ENCODE measurements at regions of chr11 and their contacts with region 1.

Region 1: DNA sequence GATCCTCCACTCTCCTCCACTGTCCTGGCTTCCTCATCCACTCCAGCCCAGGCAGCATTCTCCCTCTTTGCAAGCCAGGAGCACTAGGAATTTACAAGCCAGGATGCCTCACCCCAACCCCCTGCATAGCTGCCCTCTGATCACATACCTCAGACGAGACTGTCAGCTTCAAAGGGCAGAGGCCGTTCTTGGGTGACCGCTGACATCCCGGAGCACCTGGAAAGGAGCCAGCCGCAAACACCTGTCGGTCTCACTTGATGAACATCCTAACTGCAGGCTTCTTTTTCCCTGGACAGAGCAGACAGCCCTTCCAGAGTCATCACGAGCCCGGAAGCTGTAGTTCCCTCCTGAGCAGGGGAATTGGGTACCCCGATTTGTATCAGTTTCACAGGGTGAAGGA is 451.3 kb upstream of the B3GAT1 start:
- DNase-seq: no peak
- H3K4me3 ChIP-seq: no peak overlapping the region
- H3K27ac ChIP-seq: no peak overlapping the region
- H3K4me1 ChIP-seq: peaks cover 0 to 12% of the 10 kb centered on the region in 2 experiments; a peak in 2 of 4 replicates
- H3K27me3 ChIP-seq: no peaks in the 10 kb centered on the region
- CTCF ChIP-seq: no peak
- EP300 ChIP-seq: no peak
- RAD21 ChIP-seq: no peak

Region 2: DNA sequence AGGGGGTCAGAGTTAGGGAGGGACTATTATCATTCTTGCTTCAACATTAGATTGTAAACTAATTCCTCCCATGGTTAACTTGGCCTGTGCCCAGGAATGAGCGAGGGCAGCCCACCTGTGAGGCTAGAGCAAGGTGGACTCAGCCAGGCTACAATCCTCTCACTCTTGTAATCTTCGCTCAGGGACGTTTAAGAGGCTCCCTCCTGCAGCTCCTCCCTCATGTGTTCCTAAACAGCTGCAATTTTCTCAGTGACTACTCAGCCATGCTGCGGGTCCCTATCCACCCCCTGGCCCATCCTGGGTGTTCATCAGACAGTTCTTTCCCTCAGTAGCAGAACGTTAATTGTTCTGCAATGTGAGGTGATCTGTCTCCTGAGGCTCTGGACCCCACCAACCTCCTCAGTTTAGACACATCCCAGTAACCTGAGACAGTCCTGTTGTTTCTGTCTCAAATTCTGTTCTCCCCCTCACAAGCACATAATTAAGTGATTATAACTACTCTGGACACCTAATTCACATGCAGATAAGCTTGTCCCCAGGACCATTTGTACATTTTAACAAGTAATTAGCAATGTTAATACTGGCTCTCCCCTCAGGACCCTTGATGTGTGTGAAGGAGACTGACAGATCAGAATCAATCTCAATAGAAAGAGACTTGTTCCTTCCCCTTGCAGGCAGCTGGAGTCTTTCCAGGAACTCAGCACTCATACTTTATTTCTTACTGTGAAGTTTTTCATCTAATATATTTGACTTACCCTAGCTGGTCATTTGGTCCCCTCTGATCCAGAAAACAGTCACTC is 114.1 kb before region 1 on chr11:
- CTCF ChIA-PET with region 1: no interaction called
- POLR2A ChIA-PET with region 1: no interaction called
- DNase-seq: no peak
- H3K4me3 ChIP-seq: no peak overlapping the region
- H3K27ac ChIP-seq: no peak overlapping the region
- H3K4me1 ChIP-seq: no peaks in the 10 kb centered on the region
- H3K27me3 ChIP-seq: no peaks in the 10 kb centered on the region
- CTCF ChIP-seq: no peak
- EP300 ChIP-seq: no peak
- RAD21 ChIP-seq: no peak

Region 3: DNA sequence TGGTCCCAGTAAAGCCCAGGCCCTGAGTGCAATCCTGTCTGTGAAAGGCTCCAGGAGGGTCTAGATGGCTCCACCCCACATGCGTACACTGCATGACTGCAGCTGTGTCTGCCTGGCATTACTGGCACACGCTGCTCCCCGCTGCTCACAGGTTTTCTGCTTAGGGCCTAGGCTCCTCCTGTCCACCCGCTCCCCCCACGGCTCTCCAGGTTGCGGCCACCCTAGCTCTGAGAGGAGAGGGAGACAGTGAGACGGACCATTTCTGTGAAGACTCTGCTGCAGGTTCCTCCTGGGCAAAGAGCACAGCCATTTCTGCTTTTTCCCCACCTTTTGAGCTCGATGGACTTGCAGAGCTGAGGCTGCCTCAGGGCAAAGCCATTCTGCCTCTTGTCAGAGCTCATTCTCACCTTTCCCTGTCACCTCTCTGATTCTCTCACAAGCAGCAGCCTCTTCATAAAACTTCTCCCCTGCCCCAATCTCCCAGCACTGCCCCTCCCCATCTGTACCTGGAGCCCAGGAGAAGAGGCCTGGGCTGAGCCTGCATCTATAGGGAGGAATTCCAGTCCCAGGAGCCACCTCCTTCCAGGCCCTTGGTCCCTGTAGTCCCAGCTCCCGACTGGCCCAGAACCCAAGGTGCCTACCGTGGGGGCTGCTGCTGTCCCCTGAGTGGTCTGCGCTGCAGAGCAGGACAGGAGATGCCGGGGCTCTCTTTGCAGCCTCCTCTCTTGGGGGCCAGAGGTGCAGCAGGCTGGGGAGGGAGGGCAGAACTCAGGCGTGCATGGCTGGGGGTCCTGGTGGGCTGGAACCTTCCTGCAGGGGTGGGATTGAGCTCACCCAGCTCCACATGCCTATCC is 17.6 kb before region 1 on chr11:
- CTCF ChIA-PET with region 1: interaction called, 10 read pairs
- POLR2A ChIA-PET with region 1: no interaction called
- DNase-seq: no peak
- H3K4me3 ChIP-seq: no peak overlapping the region
- H3K27ac ChIP-seq: no peak overlapping the region
- H3K4me1 ChIP-seq: no peaks in the 10 kb centered on the region; a peak in 1 of 4 replicates
- H3K27me3 ChIP-seq: no peaks in the 10 kb centered on the region
- CTCF ChIP-seq: no peak
- EP300 ChIP-seq: no peak
- RAD21 ChIP-seq: no peak

Region 4: DNA sequence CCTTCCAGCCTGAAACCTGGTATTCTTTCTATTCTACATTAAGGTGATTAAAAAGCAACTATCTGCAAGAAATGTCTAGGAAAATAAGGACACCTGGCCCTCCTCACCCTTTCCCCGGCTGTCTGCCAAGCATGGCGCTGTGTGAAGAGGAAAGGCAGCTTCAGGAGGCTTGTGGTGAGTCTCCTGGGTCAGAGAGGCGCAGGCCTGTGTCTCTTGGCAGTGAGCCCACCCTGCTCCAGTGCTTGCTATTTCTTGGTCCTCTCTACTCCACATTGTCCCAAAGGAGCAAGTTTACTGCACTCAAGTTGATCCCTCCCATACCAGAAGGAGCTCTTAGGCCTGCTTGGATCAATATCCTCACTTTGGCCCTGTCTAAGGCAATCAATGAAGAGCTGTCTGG is 69.5 kb after region 1 on chr11:
- CTCF ChIA-PET with region 1: interaction called, 13 read pairs
- POLR2A ChIA-PET with region 1: no interaction called
- DNase-seq: no peak
- H3K4me3 ChIP-seq: no peak overlapping the region
- H3K27ac ChIP-seq: no peak overlapping the region
- H3K4me1 ChIP-seq: peaks cover 0 to 3% of the 10 kb centered on the region in 2 experiments; a peak in 1 of 4 replicates
- H3K27me3 ChIP-seq: no peaks in the 10 kb centered on the region
- CTCF ChIP-seq: no peak
- EP300 ChIP-seq: no peak
- RAD21 ChIP-seq: no peak

Region 5: DNA sequence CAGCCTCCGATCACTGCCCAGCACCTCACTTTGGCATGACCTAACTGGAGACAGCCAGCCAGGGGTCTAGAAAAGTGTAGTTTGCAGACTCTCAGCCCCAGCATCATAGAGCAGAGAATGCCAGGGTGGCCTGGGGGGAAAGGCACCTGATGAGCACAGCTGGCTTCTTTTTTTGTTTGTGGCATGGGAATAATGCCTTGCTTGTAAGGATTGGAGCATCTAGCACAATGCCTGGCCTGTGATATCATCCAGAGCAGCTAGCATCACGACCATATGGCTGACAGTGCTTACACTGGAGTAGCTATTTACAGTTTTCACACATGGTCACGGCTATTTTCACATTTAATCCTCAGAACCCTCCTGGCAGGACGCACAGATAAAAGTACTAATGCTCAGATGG is 143.5 kb after region 1 on chr11:
- CTCF ChIA-PET with region 1: interaction called, 14 read pairs
- POLR2A ChIA-PET with region 1: no interaction called
- DNase-seq: peak; percentile 34
- H3K4me3 ChIP-seq: no peak overlapping the region; a peak in 1 of 4 replicates
- H3K27ac ChIP-seq: peak overlapping the region in 1 of 2 experiments; percentile 97; a peak in 2 of 4 replicates
- H3K4me1 ChIP-seq: peaks cover 0 to 53% of the 10 kb centered on the region in 2 experiments; a peak in 2 of 4 replicates
- H3K27me3 ChIP-seq: no peaks in the 10 kb centered on the region
- CTCF ChIP-seq: no peak
- EP300 ChIP-seq: no peak; a peak in 1 of 4 replicates
- RAD21 ChIP-seq: 0 out of 2 replicates have a peak, but pooled peaks have one; percentile 2

Region 6: GRCh38 chr11:135033540-135033939 is 170.2 kb after region 1 on chr11:
- CTCF ChIA-PET with region 1: interaction called, 38 read pairs
- POLR2A ChIA-PET with region 1: no interaction called
- DNase-seq: peak; percentile 54
- H3K4me3 ChIP-seq: no peak overlapping the region; a peak in 1 of 4 replicates
- H3K27ac ChIP-seq: no peak overlapping the region
- H3K4me1 ChIP-seq: peaks cover 0 to 15% of the 10 kb centered on the region in 2 experiments; a peak in 1 of 4 replicates
- H3K27me3 ChIP-seq: no peaks in the 10 kb centered on the region
- CTCF ChIP-seq: no peak
- EP300 ChIP-seq: no peak
- RAD21 ChIP-seq: peak; percentile 88

Region 7: GRCh38 chr11:135069890-135070289 is 206.6 kb after region 1 on chr11:
- CTCF ChIA-PET with region 1: interaction called, 20 read pairs
- POLR2A ChIA-PET with region 1: no interaction called
- DNase-seq: no peak
- H3K4me3 ChIP-seq: no peak overlapping the region
- H3K27ac ChIP-seq: no peak overlapping the region
- H3K4me1 ChIP-seq: peaks cover 0 to 13% of the 10 kb centered on the region in 2 experiments; a peak in 1 of 4 replicates
- H3K27me3 ChIP-seq: no peaks in the 10 kb centered on the region
- CTCF ChIP-seq: no peak
- EP300 ChIP-seq: no peak
- RAD21 ChIP-seq: no peak

Measured in SK-N-SH (cell line).